ENCODE measurements at regions of chr6 and their contacts with region 1.

Region 1: GRCh38 chr6:85678602-85679444 is 36.1 kb upstream of the SYNCRIP start:
- DNase-seq: peak; percentile 98 to 99
- ATAC-seq: peak; percentile 83 to 86
- H3K4me3 ChIP-seq: peak overlapping the region; percentile 92 to 95 (median 94)
- H3K27ac ChIP-seq: peak overlapping the region; percentile 92 to 98 (median 96)
- H3K4me1 ChIP-seq: peaks cover 17 to 34% of the 10 kb centered on the region in 2 donors
- H3K27me3 ChIP-seq: no peaks in the 10 kb centered on the region
- CTCF ChIP-seq: peak in 2 of 5 experiments; percentile 25 to 31
- POLR2A ChIP-seq: peak; percentile 99 to 100

Region 2: DNA sequence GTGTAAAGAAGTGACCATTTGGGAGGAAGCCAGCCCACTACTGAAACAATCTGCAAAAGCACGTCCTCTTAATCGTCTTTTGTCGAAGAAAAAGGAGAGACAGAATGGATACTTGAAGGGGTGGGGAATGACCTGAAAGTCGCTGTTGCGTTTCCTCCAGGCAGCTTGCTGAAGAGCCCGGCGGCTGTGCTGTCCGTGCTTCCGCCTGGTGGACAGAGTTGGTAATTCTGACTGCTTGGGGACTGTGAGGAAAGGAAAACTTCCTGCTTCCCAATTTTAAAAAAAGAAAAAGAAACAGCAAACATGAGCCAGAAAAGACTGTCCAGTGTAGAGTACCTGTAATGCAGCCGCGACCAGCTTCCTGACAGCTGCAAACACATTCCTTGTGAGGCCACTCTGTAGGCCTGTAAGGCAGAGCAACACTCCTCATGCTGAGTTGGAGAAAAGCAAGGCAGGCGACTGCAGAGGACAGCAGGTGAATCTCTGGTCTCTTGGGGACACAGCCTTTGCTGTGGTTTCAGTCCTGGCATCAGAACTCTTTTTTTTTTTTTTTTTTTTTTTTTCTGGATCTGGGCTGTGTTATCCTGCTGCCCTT is 663.3 kb before region 1 on chr6:
- in situ Hi-C with region 1: no loop called
- intact Hi-C with region 1: no loop called
- DNase-seq: peak in 1 of 2 donors; percentile 12
- ATAC-seq: no peak
- H3K4me3 ChIP-seq: no peak overlapping the region
- H3K27ac ChIP-seq: no peak overlapping the region
- H3K4me1 ChIP-seq: no peaks in the 10 kb centered on the region
- H3K27me3 ChIP-seq: no peaks in the 10 kb centered on the region
- CTCF ChIP-seq: peak in 2 of 5 experiments; percentile 23 to 48
- POLR2A ChIP-seq: no peak

Region 3: GRCh38 chr6:85593438-85594196 is 85.2 kb before region 1 on chr6 and contains the start of gene SNX14:
- in situ Hi-C with region 1: loop called in 3 of 4 experiments (anchors 10 kb)
- intact Hi-C with region 1: loop called (anchors 1 kb)
- DNase-seq: peak; percentile 92 to 93
- ATAC-seq: peak; percentile 92 to 95
- H3K4me3 ChIP-seq: peak within 1 kb of the TSS; percentile 80 to 97 (median 84)
- H3K27ac ChIP-seq: peak within 1 kb of the TSS; percentile 93 to 95 (median 94)
- H3K4me1 ChIP-seq: peaks cover 18 to 28% of the 10 kb centered on the region in 2 donors
- H3K27me3 ChIP-seq: no peaks in the 10 kb centered on the region
- CTCF ChIP-seq: peak in 3 of 5 experiments; percentile 17 to 38 (median 23)
- POLR2A ChIP-seq: peak; percentile 79 to 82
- total RNA-seq, gene SNX14: 16.0 to 38.5 (median 24.7) TPM

Region 4: GRCh38 chr6:85637579-85637978 is 41.2 kb before region 1 on chr6:
- in situ Hi-C with region 1: loop called in 1 of 4 experiments (anchors 5 kb)
- intact Hi-C with region 1: no loop called
- DNase-seq: no peak
- ATAC-seq: no peak
- H3K4me3 ChIP-seq: no peak overlapping the region
- H3K27ac ChIP-seq: peak overlapping the region in 2 of 4 donors; percentile 1 to 55
- H3K4me1 ChIP-seq: peaks cover 48 to 51% of the 10 kb centered on the region in 2 donors
- H3K27me3 ChIP-seq: no peaks in the 10 kb centered on the region
- CTCF ChIP-seq: no peak
- POLR2A ChIP-seq: no peak

Region 5: DNA sequence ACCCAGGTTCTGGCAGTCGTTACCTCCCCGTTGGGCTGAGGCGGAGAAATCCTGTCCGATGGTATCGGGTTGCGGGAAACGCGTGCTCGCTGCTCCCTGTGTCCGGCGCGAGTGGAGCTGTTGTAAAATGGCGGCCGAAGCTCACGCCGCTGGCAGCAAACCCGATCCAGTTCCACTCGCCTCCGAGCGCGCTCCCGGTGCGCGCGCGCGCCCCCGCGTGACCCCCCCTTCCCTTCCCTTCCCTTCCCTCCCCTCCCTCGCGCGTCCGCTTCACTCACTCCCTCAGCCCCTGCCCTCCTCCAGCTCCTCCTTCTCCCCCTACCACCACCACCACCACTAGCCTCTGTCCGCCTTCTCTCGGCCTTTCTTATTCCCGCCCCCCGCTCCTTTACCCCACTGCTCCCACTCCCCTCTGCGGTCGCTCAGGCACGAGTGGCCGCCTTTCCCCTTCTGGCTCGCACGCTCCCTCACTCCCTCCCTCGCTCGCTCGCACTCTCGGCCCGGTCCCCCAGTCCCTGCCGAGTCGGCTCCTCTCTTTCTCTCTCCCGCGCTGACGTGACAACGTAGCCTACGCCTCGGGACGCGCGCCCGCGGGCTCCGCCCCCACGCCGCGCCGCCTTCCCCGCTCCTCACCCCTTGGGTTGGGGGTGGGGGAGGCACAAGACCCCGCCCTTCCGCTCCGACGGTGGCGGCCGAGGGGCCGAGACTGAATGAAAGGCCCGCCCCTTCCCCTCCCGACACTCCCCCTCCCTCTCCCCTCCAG is 35.9 kb before region 1 on chr6 and contains the start of gene SYNCRIP:
- in situ Hi-C with region 1: loop called in 2 of 4 experiments (anchors 5 kb)
- intact Hi-C with region 1: loop called (anchors 1 kb)
- DNase-seq: peak; percentile 99
- ATAC-seq: peak; percentile 67 to 70
- H3K4me3 ChIP-seq: peak within 1 kb of the TSS; percentile 93 to 100 (median 98)
- H3K27ac ChIP-seq: peak within 1 kb of the TSS; percentile 96 to 98 (median 98)
- H3K4me1 ChIP-seq: peaks cover 36 to 42% of the 10 kb centered on the region in 2 donors
- H3K27me3 ChIP-seq: no peaks in the 10 kb centered on the region
- CTCF ChIP-seq: no peak
- POLR2A ChIP-seq: peak; percentile 90 to 93
- total RNA-seq, gene SYNCRIP: 43.0 to 59.3 (median 54.5) TPM